Naive thymus-derived CD4-positive, alpha-beta T cell (primary cell): ENCODE measurements at regions of chr1 and their contacts with region 1.

Region 1: DNA sequence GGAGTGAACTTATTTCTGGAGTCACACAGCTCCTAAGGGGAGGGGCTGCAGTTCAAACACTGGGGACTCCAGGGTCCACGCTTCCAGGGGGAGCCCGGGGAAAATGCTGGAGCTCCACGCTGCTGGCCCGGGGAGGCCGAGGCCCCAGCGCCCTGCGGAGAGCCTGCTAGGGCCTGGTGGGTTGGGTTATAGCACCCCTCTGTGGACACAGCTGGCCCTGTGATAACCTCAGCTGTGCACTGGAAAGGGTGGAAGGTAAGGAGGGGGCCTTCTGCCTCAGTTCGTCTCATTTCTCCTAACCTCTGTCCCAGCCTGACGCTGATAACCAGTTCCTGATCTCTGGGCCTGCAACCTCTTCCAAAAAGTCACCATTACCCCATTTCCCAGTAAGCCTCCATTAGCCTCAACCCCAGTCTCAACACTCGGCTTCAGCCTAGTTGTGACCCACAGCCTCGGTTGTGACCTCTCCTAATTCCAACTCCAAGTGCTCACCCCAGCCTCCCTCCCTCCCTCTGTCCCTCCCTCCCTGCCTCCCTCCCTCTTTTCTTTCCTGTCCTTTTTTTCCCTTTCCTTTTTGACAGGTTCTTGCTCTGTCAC is 7.1 kb downstream of the NBL1 start:
- DNase-seq: peak in 6 of 9 donors; percentile 40 to 55 (median 49)
- ATAC-seq: peak; percentile 60
- H3K4me3 ChIP-seq: no peak overlapping the region
- H3K4me3 Mint-ChIP-seq: no peak overlapping the region
- H3K27ac ChIP-seq: no peak overlapping the region
- H3K27ac Mint-ChIP-seq: peak overlapping the region in 4 of 9 donors; percentile 12 to 65 (median 43)
- H3K4me1 ChIP-seq: peaks cover 3 to 4% of the 10 kb centered on the region in 2 donors
- H3K4me1 Mint-ChIP-seq: peaks cover 10 to 31% (median 18%) of the 10 kb centered on the region in 7 donors
- H3K27me3 ChIP-seq: no peaks in the 10 kb centered on the region
- H3K27me3 Mint-ChIP-seq: peaks cover 0 to 11% (median 0%) of the 10 kb centered on the region in 5 donors

Region 2: GRCh38 chr1:19209990-19210771 is 441.1 kb before region 1 on chr1 and contains the start of gene UBR4:
- CTCF ChIA-PET with region 1: interaction called, 3 read pairs
- POLR2A ChIA-PET with region 1: no interaction called
- intact Hi-C with region 1: loop called in 1 of 2 experiments (anchors 1 kb)
- DNase-seq: peak; percentile 95 to 97 (median 96)
- ATAC-seq: peak; percentile 95
- H3K4me3 ChIP-seq: peak within 1 kb of the TSS; percentile 60
- H3K4me3 Mint-ChIP-seq: peak within 1 kb of the TSS; percentile 83 to 98 (median 94)
- H3K27ac ChIP-seq: peak within 1 kb of the TSS; percentile 85
- H3K27ac Mint-ChIP-seq: peak within 1 kb of the TSS; percentile 94 to 99 (median 97)
- H3K4me1 ChIP-seq: peaks cover 24 to 38% of the 10 kb centered on the region in 2 donors
- H3K4me1 Mint-ChIP-seq: peaks cover 49 to 87% (median 82%) of the 10 kb centered on the region in 7 donors
- H3K27me3 ChIP-seq: no peaks in the 10 kb centered on the region
- H3K27me3 Mint-ChIP-seq: peaks cover 0 to 2% (median 0%) of the 10 kb centered on the region in 5 donors
- total RNA-seq, gene UBR4: 120 to 174 (median 159) TPM

Region 3: DNA sequence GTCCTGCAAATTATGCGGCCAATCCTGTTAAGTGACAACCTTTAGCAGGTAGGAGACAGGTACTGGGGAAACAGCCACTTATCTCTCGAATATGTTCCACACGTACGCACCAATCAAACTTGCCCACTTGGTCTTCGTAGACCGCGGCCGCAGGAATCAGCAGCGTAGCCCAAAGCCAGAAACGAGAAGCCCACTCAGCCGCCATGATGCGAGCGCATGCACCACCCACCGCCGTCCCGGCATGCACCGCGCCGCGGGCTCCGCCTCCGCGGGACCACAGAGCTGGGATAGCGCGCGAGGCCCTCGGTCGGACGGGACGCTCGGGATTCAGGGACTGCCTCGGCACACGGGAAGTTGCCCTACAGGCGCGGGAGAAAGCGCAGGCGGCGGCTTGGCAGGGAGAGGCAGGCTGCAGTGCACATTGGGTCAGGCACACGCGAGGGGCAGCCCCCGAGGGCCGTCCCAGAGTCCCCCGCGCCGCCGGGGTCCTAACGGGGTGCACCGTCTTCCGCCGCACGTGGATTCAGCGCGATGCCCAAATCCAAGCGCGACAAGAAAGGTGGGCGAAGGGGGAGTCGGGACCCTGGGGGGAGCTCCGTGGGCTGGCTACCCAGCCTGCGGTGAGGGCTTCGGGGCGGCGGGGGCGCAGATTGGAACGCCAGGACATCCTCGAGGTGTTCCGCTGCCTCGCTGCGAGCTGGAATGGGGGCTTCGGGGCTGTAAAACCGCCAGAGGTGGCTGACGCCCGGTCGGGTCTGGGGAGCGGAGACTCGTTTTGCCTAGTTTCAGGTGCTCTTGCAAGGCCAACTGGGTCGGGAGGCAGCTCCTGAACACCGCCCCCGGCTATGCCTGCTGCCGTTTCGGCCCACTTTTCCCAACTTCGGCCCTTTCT is 399.7 kb before region 1 on chr1 and contains the starts of genes EMC1 and MRTO4:
- CTCF ChIA-PET with region 1: no interaction called
- POLR2A ChIA-PET with region 1: no interaction called
- intact Hi-C with region 1: loop called in 1 of 2 experiments (anchors 2 kb)
- DNase-seq: peak; percentile 83 to 96 (median 92)
- ATAC-seq: peak; percentile 97
- H3K4me3 ChIP-seq: peak within 1 kb of the TSS; percentile 92
- H3K4me3 Mint-ChIP-seq: peak within 1 kb of the TSS; percentile 91 to 98 (median 96)
- H3K27ac ChIP-seq: peak within 1 kb of the TSS; percentile 91
- H3K27ac Mint-ChIP-seq: peak within 1 kb of the TSS; percentile 91 to 97 (median 95)
- H3K4me1 ChIP-seq: peaks cover 26 to 30% of the 10 kb centered on the region in 2 donors
- H3K4me1 Mint-ChIP-seq: peaks cover 20 to 46% (median 29%) of the 10 kb centered on the region in 7 donors
- H3K27me3 ChIP-seq: no peaks in the 10 kb centered on the region
- H3K27me3 Mint-ChIP-seq: no peaks in the 10 kb centered on the region
- total RNA-seq, gene EMC1: 29.8 to 43.7 (median 37.1) TPM
- total RNA-seq, gene MRTO4: 17.1 to 42.3 (median 22.4) TPM

Region 4: GRCh38 chr1:19390901-19391595 is 260.2 kb before region 1 on chr1:
- CTCF ChIA-PET with region 1: interaction called, 3 read pairs
- POLR2A ChIA-PET with region 1: interaction called, 5 read pairs
- intact Hi-C with region 1: loop called (anchors 1 kb)
- DNase-seq: peak; percentile 33 to 84 (median 76)
- ATAC-seq: peak; percentile 84
- H3K4me3 ChIP-seq: peak overlapping the region; percentile 46
- H3K4me3 Mint-ChIP-seq: peak overlapping the region; percentile 78 to 90 (median 84)
- H3K27ac ChIP-seq: peak overlapping the region; percentile 60
- H3K27ac Mint-ChIP-seq: peak overlapping the region; percentile 82 to 98 (median 94)
- H3K4me1 ChIP-seq: peaks cover 39 to 47% of the 10 kb centered on the region in 2 donors
- H3K4me1 Mint-ChIP-seq: peaks cover 58 to 91% (median 83%) of the 10 kb centered on the region in 7 donors
- H3K27me3 ChIP-seq: no peaks in the 10 kb centered on the region
- H3K27me3 Mint-ChIP-seq: no peaks in the 10 kb centered on the region

Region 5: DNA sequence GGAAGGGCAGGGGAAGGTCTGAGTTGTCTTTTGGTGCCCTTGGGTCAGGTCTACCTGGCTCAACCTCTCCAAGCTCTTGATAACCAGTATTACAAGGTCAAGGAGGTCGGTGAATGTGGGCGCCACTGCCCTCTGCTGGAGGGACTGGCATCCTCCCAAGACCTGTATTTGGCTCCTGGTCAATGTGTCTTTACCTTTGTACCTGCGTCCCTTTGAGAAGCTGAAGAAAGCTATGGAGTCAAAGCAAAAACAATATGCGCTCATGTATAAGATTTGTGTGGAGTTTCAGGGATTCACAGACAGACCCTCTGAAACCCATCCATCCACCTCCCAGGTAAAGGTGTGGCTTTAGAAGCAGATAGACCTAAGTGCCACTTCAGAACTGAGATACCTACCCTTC is 68.9 kb before region 1 on chr1:
- CTCF ChIA-PET with region 1: interaction called, 10 read pairs
- POLR2A ChIA-PET with region 1: no interaction called
- intact Hi-C with region 1: loop called (anchors 1 kb)
- DNase-seq: peak; percentile 37 to 72 (median 59)
- ATAC-seq: peak; percentile 94
- H3K4me3 ChIP-seq: no peak overlapping the region
- H3K4me3 Mint-ChIP-seq: no peak overlapping the region
- H3K27ac ChIP-seq: no peak overlapping the region
- H3K27ac Mint-ChIP-seq: peak overlapping the region in 2 of 9 donors; percentile 15 to 76
- H3K4me1 ChIP-seq: no peaks in the 10 kb centered on the region
- H3K4me1 Mint-ChIP-seq: peaks cover 5 to 15% (median 12%) of the 10 kb centered on the region in 7 donors
- H3K27me3 ChIP-seq: no peaks in the 10 kb centered on the region
- H3K27me3 Mint-ChIP-seq: peaks cover 0 to 8% (median 0%) of the 10 kb centered on the region in 5 donors

Region 6: GRCh38 chr1:19635646-19636045 is 15.6 kb before region 1 on chr1:
- CTCF ChIA-PET with region 1: no interaction called
- POLR2A ChIA-PET with region 1: no interaction called
- intact Hi-C with region 1: no loop called
- DNase-seq: no peak
- ATAC-seq: no peak
- H3K4me3 ChIP-seq: no peak overlapping the region
- H3K4me3 Mint-ChIP-seq: no peak overlapping the region
- H3K27ac ChIP-seq: no peak overlapping the region
- H3K27ac Mint-ChIP-seq: no peak overlapping the region
- H3K4me1 ChIP-seq: no peaks in the 10 kb centered on the region
- H3K4me1 Mint-ChIP-seq: peaks cover 0 to 2% (median 0%) of the 10 kb centered on the region in 7 donors
- H3K27me3 ChIP-seq: no peaks in the 10 kb centered on the region
- H3K27me3 Mint-ChIP-seq: no peaks in the 10 kb centered on the region

Region 7: DNA sequence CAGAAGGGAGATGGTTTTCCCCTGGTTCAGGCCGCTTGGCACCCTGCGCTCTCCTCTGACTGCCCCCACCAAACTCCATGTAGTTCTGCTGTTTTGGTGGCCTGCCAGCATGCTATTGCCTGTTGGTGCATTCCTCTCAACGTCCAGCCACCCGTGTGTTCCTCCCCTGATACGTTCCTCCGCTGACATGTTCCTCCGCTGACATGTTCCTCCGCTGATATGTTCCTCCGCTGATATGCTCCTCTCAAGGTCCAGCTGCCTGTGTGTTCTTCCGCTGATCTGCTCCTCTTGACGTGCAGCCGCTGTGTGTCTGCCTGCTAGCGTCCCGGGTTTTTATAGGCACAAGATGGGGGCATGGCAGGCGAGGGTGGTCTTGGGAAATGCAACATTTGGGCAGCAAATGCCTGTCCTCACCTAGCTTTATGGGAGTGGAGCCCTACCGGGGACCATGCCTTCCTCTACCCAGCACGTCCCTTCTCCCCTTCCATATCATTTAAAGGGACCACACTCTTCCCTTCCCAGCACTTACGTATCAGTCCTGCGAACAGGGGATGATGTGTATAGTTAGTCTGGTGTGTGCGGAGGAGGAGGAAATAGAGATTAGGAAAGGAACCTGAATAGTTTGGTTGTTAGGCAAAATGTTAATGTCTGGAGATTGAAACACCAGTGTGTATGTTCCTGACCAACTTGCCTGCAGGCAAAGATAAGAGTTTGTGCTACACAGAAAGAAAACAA is 378.1 kb after region 1 on chr1:
- CTCF ChIA-PET with region 1: no interaction called
- POLR2A ChIA-PET with region 1: no interaction called
- intact Hi-C with region 1: no loop called
- DNase-seq: no peak
- ATAC-seq: no peak
- H3K4me3 ChIP-seq: no peak overlapping the region
- H3K4me3 Mint-ChIP-seq: no peak overlapping the region
- H3K27ac ChIP-seq: no peak overlapping the region
- H3K27ac Mint-ChIP-seq: no peak overlapping the region
- H3K4me1 ChIP-seq: no peaks in the 10 kb centered on the region
- H3K4me1 Mint-ChIP-seq: peaks cover 0 to 2% (median 0%) of the 10 kb centered on the region in 7 donors
- H3K27me3 ChIP-seq: peaks cover 0 to 3% of the 10 kb centered on the region in 2 donors
- H3K27me3 Mint-ChIP-seq: peaks cover 25 to 67% (median 46%) of the 10 kb centered on the region in 5 donors